Activated naive CD4-positive, alpha-beta T cell treated with anti-CD3 and anti-CD28 coated beads for 36 hours (primary cell): ENCODE measurements at regions of chr4 and their contacts with region 1.

Region 1: DNA sequence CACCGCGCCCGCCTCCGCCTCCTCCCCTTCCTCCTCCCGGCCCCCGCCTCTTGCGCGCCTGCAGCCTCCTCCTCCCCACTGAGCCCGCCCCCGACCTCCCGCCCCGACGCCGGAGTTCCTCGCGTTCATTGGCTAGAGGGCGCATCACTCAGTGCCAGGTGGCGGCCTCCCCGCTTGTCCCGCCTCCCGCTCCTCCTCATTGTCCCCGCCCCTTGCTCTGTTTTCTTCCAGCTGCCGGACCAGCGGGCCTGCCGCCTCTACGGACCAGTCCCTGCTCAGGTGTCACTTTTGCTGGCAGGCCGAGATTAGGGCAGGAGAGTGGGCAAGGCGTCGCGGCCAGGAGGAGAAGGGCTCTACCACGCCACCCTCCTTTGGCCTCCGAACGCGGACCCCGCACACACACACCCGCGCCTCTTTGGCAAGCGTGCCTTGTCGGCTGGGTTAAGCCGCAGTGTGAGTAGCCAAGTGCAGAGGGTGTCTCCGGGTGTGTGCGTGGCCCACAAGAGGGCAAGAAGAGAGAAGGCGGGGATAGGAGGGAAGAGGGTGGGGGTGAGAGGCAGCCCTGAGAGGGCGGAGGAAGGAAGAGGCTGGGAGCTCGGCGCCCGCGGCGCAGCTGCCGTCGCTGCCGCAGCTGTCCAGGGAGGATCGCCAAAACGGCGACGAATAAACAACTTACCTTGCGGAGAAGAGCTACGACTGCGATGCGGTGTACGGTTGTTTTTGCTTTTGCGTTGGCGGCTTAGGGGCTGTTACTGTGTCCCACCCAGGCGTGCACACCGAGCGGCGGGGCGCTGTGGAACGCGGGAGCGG is 436 bp upstream of the PPP3CA start:
- DNase-seq: peak; percentile 99
- H3K4me3 Mint-ChIP-seq: peak overlapping the region; percentile 95
- H3K27ac Mint-ChIP-seq: peak overlapping the region; percentile 82
- H3K4me1 Mint-ChIP-seq: peaks cover 22% of the 10 kb centered on the region
- H3K27me3 Mint-ChIP-seq: peaks cover 31% of the 10 kb centered on the region

Region 2: DNA sequence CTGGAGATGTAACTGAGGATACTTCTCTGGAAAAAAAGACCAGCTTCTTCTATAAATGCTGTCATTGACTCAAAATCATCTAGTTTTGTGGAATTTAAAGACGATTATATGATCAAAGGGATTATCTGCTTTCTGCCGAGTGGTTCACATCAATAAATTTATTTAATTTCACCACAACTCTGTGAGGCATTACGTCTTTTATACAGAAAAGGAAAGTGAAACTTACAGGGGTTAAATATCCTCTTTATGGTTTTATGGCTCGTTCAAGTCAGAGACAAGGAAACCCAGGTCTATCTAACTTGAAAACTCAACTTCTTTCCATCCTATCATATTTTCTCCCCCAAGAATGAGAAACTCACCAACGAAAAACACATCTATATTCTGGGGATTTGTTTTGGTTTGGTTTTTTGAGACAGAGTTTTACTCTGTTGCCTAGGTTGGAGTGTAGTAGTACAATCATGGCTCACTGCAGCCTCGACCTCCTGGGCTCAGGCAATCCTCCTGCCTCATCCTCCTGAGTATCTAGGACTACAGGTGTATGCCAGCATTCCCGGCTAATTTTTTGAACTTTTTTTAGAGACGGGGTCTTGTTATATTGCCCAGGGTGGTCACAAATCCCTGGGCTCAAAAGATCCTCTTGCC is 452.1 kb before region 1 on chr4:
- CTCF ChIA-PET with region 1: no interaction called
- intact Hi-C with region 1: loop called (anchors 10 kb)
- DNase-seq: no peak
- H3K4me3 Mint-ChIP-seq: peak overlapping the region; percentile 60
- H3K27ac Mint-ChIP-seq: no peak overlapping the region
- H3K4me1 Mint-ChIP-seq: peaks cover 14% of the 10 kb centered on the region
- H3K27me3 Mint-ChIP-seq: peaks cover 2% of the 10 kb centered on the region

Region 3: DNA sequence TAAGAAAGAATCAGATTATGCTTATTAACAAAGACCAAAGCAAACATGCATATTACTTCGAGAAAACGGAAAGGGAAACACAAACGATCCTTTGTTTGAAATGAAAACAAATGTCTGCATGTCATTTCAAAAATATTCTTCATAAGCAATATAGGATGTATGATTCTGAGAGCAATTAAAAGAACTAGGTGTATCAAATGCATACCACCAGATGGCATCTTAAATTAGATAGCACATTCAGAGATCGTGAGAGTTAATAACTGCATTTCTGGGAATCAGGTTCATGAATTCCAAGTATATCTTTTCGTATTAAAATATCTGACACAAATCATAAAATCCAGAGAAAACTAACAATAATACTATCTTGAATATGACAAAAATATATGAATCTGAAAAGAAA is 159.9 kb before region 1 on chr4:
- CTCF ChIA-PET with region 1: no interaction called
- intact Hi-C with region 1: loop called (anchors 1 kb)
- DNase-seq: no peak
- H3K4me3 Mint-ChIP-seq: no peak overlapping the region
- H3K27ac Mint-ChIP-seq: no peak overlapping the region
- H3K4me1 Mint-ChIP-seq: peaks cover 6% of the 10 kb centered on the region
- H3K27me3 Mint-ChIP-seq: no peaks in the 10 kb centered on the region

Region 4: GRCh38 chr4:101282076-101282844 is 65.5 kb before region 1 on chr4:
- CTCF ChIA-PET with region 1: interaction called, 3 read pairs
- intact Hi-C with region 1: loop called (anchors 1 kb)
- DNase-seq: peak; percentile 72
- H3K4me3 Mint-ChIP-seq: no peak overlapping the region
- H3K27ac Mint-ChIP-seq: no peak overlapping the region
- H3K4me1 Mint-ChIP-seq: peaks cover 42% of the 10 kb centered on the region
- H3K27me3 Mint-ChIP-seq: no peaks in the 10 kb centered on the region

Region 5: DNA sequence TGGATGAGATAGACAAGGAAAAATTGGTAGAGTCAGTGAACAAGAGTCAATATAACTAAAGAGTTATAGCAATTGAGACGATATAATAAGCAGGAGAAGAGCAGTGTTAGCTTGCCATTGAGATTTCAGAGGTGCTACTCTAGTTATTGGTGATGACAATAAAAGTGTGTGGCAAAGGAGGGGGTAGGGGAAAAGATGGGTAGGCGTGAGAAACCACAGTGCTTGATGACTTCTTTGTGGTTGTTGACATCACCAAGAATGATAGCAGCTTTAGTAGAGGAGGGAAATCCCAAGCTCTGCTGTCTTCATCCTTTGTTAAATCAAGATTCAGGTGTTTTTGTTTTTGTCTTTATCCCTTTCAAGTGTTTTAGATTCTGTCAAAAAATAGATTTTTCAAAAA is 179.4 kb after region 1 on chr4:
- CTCF ChIA-PET with region 1: no interaction called
- intact Hi-C with region 1: loop called (anchors 1 kb)
- DNase-seq: peak; percentile 88
- H3K4me3 Mint-ChIP-seq: no peak overlapping the region
- H3K27ac Mint-ChIP-seq: no peak overlapping the region
- H3K4me1 Mint-ChIP-seq: peaks cover 15% of the 10 kb centered on the region
- H3K27me3 Mint-ChIP-seq: peaks cover 45% of the 10 kb centered on the region

Region 6: GRCh38 chr4:101730291-101731117 is 382.7 kb after region 1 on chr4:
- CTCF ChIA-PET with region 1: interaction called, 4 read pairs
- intact Hi-C with region 1: loop called (anchors 2 kb)
- DNase-seq: peak; percentile 76
- H3K4me3 Mint-ChIP-seq: no peak overlapping the region
- H3K27ac Mint-ChIP-seq: no peak overlapping the region
- H3K4me1 Mint-ChIP-seq: no peaks in the 10 kb centered on the region
- H3K27me3 Mint-ChIP-seq: no peaks in the 10 kb centered on the region

Region 7: GRCh38 chr4:102760645-102761295 is 1413.0 kb after region 1 on chr4 and contains the start of gene MANBA:
- CTCF ChIA-PET with region 1: no interaction called
- intact Hi-C with region 1: loop called (anchors 2 kb)
- DNase-seq: peak; percentile 89
- H3K4me3 Mint-ChIP-seq: peak within 1 kb of the TSS; percentile 88
- H3K27ac Mint-ChIP-seq: peak within 1 kb of the TSS; percentile 36
- H3K4me1 Mint-ChIP-seq: peaks cover 27% of the 10 kb centered on the region
- H3K27me3 Mint-ChIP-seq: no peaks in the 10 kb centered on the region
- total RNA-seq, gene MANBA: 9.8 to 11.0 TPM